GM23248 (cell line): ENCODE measurements at regions of chr12 and their contacts with region 1.

Region 1: GRCh38 chr12:96069511-96070231 is 34.3 kb upstream of the LTA4H start:
- DNase-seq: no peak
- H3K4me3 ChIP-seq: no peak overlapping the region
- H3K27ac ChIP-seq: no peak overlapping the region
- H3K4me1 ChIP-seq: no peaks in the 10 kb centered on the region
- H3K27me3 ChIP-seq: no peaks in the 10 kb centered on the region

Region 2: DNA sequence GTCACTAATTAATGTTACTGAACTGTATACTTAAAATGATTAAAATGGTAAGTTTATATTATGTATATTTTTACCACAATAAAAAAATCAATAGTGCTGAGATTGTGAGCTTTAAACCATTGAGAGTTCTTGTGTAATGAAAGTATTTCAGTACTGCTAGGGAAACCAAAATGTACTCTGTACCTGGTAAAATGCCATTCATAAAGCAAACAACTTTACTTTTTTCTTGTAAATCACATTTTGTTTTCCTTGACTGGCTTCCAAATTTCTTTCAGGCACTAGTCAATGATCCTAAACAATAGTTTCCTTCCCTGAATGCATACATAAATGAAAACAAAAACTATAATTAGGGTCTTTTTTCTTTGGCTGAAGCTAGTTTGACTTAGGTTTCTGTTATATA is 240.3 kb before region 1 on chr12:
- in situ Hi-C with region 1: no loop called
- DNase-seq: no peak
- H3K4me3 ChIP-seq: no peak overlapping the region
- H3K27ac ChIP-seq: no peak overlapping the region
- H3K4me1 ChIP-seq: no peaks in the 10 kb centered on the region
- H3K27me3 ChIP-seq: peaks cover 85% of the 10 kb centered on the region

Region 3: DNA sequence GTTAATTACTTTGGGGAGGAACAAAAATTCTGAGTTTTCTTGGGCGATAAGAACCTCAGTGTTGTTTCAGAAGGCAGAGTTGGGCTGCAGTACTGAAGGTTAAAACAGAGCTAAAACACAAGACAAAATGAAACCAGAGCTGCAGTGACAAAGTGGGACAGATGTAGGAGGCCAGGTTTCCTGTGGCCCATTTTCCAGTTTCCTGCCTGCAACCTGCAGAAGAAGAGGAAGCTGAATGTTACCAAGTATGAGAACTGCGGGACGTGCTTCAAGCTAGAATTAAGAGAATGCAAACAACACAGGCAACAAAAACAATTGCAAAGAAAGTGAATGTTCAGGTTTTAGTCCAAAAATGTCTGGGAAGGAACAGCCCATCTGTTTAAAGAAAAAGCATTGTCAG is 142.3 kb after region 1 on chr12:
- in situ Hi-C with region 1: loop called (anchors 5 kb)
- DNase-seq: no peak
- H3K4me3 ChIP-seq: no peak overlapping the region
- H3K27ac ChIP-seq: peak overlapping the region; percentile 16
- H3K4me1 ChIP-seq: peaks cover 35% of the 10 kb centered on the region
- H3K27me3 ChIP-seq: no peaks in the 10 kb centered on the region